ENCODE measurements at regions of chr5 and their contacts with region 1.

Region 1: DNA sequence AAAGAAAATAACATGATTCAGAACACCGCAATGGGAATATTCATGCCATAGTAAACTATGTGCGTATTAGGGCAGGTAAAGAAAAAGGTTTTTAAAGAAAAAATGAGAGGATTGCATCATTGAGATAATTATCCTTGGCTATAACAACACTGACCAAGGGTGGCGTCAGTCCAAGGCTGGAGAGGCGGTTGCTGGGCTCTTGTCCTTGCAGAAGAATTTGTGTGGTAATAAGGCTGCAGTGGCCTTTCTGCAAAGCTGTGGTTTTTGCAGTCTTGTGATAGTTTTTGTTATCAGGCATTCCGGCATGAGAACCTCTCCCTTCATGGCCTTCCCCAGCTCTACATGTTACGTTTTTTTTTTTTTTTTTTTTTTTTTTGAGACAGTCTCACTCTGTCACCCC is 14.0 kb downstream of the BOD1 start:
- DNase-seq: no peak
- H3K4me3 Mint-ChIP-seq: no peak overlapping the region
- H3K27ac Mint-ChIP-seq: no peak overlapping the region
- H3K4me1 Mint-ChIP-seq: no peaks in the 10 kb centered on the region
- H3K27me3 Mint-ChIP-seq: no peaks in the 10 kb centered on the region

Region 2: GRCh38 chr5:173592050-173592669 is 10.3 kb before region 1 on chr5:
- CTCF ChIA-PET with region 1: interaction called, 11 read pairs
- POLR2A ChIA-PET with region 1: no interaction called
- DNase-seq: peak; percentile 25
- H3K4me3 Mint-ChIP-seq: no peak overlapping the region
- H3K27ac Mint-ChIP-seq: no peak overlapping the region
- H3K4me1 Mint-ChIP-seq: no peaks in the 10 kb centered on the region
- H3K27me3 Mint-ChIP-seq: peaks cover 5% of the 10 kb centered on the region